Naive thymus-derived CD4-positive, alpha-beta T cell (primary cell): ENCODE measurements at regions of chr9 and their contacts with region 1.

Region 1: DNA sequence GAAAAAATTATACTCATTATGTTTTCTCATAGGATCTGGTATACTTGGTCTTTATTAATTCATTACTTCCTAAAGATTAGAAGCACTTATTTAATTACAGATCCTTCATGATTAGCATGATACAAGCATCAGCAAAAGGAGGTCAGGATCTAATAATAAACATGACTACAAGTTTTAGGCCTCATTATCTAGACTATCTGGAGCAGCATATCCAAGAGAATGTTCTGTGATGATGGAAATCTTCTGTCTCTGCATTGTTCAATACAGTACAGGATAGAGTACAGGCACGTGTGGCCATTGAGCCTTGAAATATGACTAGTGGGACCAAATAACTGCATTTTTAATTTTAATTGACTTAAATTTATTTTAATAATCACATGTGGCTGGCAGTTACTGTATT is 21.2 kb downstream of the SETX start:
- DNase-seq: no peak
- ATAC-seq: no peak
- H3K4me3 ChIP-seq: no peak overlapping the region
- H3K4me3 Mint-ChIP-seq: no peak overlapping the region
- H3K27ac ChIP-seq: no peak overlapping the region
- H3K27ac Mint-ChIP-seq: no peak overlapping the region
- H3K4me1 ChIP-seq: peaks cover 0 to 4% of the 10 kb centered on the region in 2 donors
- H3K4me1 Mint-ChIP-seq: peaks cover 10 to 35% (median 24%) of the 10 kb centered on the region in 7 donors
- H3K27me3 ChIP-seq: no peaks in the 10 kb centered on the region
- H3K27me3 Mint-ChIP-seq: no peaks in the 10 kb centered on the region

Region 2: DNA sequence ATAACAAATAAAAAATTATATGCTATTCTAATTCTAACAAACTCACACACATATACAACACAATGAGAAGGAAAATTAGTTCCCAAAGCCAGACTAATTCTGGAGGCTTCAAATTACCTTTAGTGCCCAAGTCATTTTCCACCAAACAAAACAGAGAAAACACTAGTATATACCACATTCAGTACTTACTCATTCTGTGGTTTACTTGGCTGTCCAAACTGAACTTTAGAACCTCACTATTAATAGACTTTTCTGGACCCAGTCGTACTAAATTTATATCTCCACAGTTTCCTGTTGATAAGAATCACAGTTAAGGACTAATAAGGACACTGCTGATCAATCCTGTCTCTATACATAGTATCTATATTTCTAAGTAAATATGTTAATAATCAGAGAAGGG is 45.2 kb before region 1 on chr9:
- CTCF ChIA-PET with region 1: no interaction called
- POLR2A ChIA-PET with region 1: no interaction called
- intact Hi-C with region 1: loop called in 1 of 2 experiments (anchors 10 kb)
- DNase-seq: no peak
- ATAC-seq: no peak
- H3K4me3 ChIP-seq: no peak overlapping the region
- H3K4me3 Mint-ChIP-seq: no peak overlapping the region
- H3K27ac ChIP-seq: no peak overlapping the region
- H3K27ac Mint-ChIP-seq: peak overlapping the region in 5 of 9 donors; percentile 38 to 59 (median 47)
- H3K4me1 ChIP-seq: no peaks in the 10 kb centered on the region
- H3K4me1 Mint-ChIP-seq: peaks cover 2 to 21% (median 8%) of the 10 kb centered on the region in 7 donors
- H3K27me3 ChIP-seq: no peaks in the 10 kb centered on the region
- H3K27me3 Mint-ChIP-seq: no peaks in the 10 kb centered on the region